K562 (cell line): ENCODE measurements at regions of chr1 and their contacts with region 1.

Region 1: GRCh38 chr1:231040019-231040799 is at the start of gene FAM89A:
- DNase-seq: peak; percentile 84 to 99 (median 98)
- ATAC-seq: peak; percentile 79
- H3K4me3 ChIP-seq: peak within 1 kb of the TSS; percentile 75
- H3K27ac ChIP-seq: peak within 1 kb of the TSS; percentile 72
- H3K4me1 ChIP-seq: peaks cover 30 to 45% of the 10 kb centered on the region in 2 experiments
- H3K27me3 ChIP-seq: no peaks in the 10 kb centered on the region
- CTCF ChIP-seq: no peak
- EP300 ChIP-seq: no peak
- POLR2A ChIP-seq: peak; percentile 83
- RAD21 ChIP-seq: no peak
- polyA plus RNA-seq, gene FAM89A: 8.7 to 13.3 TPM

Region 2: DNA sequence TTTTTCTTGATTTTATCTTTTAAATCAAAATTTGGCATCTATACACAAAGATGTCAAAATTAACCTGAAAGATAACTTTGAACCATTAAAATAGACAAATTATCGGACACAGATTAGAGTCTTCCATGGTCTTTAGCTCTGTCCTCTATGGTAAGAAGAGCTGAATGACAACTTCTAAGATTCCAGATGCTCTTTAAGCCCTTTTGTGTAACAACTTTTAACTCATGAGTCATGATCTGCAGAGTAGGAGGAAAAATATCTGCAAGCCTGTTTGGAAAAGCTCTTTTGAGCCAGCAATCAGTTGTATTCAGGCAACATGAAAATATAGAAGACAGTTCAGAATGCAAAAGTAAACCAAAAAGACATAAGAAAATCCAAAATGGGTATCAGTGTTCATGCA is 99.4 kb before region 1 on chr1:
- CTCF ChIA-PET with region 1: no interaction called
- POLR2A ChIA-PET with region 1: no interaction called
- in situ Hi-C with region 1: no loop called
- intact Hi-C with region 1: no loop called
- DNase-seq: no peak
- ATAC-seq: no peak
- H3K4me3 ChIP-seq: no peak overlapping the region
- H3K27ac ChIP-seq: no peak overlapping the region
- H3K4me1 ChIP-seq: no peaks in the 10 kb centered on the region
- H3K27me3 ChIP-seq: no peaks in the 10 kb centered on the region
- CTCF ChIP-seq: no peak
- EP300 ChIP-seq: no peak
- POLR2A ChIP-seq: no peak
- RAD21 ChIP-seq: no peak

Region 3: DNA sequence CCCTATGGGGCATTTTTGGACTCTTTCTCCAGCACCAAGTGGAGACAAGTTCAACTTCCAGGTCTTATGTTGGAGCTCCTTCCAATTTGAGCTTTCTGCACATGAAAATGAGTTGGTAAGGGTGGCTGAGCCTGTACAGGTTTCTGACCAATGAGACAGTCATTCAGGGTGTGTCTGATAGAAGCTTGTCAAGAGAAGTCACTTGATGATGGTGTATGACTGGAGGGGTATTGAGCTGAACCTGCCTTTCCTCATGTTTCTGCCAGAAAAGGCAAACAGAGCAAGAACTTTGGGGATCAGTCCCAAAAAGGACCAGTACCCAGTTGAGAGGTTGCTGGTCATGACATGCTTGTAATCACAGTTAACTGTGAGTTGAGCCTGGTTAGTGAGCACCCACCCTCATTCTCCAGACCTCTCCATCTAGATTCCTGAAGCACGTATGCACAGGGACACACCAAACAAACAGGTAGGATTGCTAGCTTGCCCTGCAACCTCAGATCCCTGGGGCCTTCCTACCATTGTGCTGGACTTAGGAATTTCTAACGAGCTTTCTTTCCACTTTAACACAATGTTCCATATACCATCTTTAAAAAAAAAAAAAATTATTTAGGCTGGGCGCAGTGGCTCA is 26.7 kb before region 1 on chr1:
- CTCF ChIA-PET with region 1: no interaction called
- POLR2A ChIA-PET with region 1: interaction called, 11 read pairs
- in situ Hi-C with region 1: no loop called
- intact Hi-C with region 1: no loop called
- DNase-seq: no peak
- ATAC-seq: no peak
- H3K4me3 ChIP-seq: no peak overlapping the region
- H3K27ac ChIP-seq: no peak overlapping the region
- H3K4me1 ChIP-seq: no peaks in the 10 kb centered on the region
- H3K27me3 ChIP-seq: no peaks in the 10 kb centered on the region; a peak in 1 of 5 replicates
- CTCF ChIP-seq: no peak
- EP300 ChIP-seq: no peak
- POLR2A ChIP-seq: no peak
- RAD21 ChIP-seq: no peak

Region 4: DNA sequence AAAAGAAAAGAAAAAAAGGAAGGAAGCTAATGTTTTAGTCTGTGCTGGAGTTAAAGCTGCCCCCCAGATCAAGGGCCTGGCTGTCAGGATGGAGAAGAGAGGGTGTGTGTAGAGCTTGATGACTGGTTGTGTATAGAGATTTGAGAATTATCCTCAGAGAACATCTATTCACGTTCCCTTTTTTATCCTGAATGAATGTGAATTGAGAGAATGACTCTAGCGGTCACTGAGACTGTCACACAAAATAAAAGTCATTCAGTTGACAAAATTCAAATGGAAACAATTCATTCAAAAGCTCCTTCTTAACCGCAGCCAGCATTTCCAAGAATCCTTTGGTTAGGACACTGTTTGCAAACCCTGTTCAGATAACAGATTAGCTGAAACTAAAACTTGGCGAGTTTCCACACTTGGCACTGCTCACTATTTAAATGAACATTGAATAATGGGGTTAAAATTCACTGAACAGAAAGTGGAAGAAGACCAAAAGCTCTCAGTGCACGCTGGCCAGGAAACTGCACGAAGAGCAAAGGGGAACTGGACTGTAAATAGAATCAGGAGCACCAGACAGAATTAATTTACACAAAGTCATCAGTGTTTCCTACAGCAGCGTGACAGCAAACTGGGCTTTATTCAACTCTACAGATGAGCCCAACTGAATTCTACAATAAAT is 13.4 kb after region 1 on chr1:
- CTCF ChIA-PET with region 1: no interaction called
- POLR2A ChIA-PET with region 1: interaction called, 20 read pairs
- in situ Hi-C with region 1: no loop called
- intact Hi-C with region 1: no loop called
- DNase-seq: peak in 2 of 4 experiments; percentile 50 to 85
- ATAC-seq: peak; percentile 49
- H3K4me3 ChIP-seq: peak overlapping the region; percentile 6; the same call in 1 of the 2 replicates
- H3K27ac ChIP-seq: peak overlapping the region; percentile 32
- H3K4me1 ChIP-seq: peaks cover 7 to 37% of the 10 kb centered on the region in 2 experiments
- H3K27me3 ChIP-seq: no peaks in the 10 kb centered on the region
- CTCF ChIP-seq: 0 out of 6 replicates have a peak, but pooled peaks of 1 of the 3 experiments have one; percentile 3
- EP300 ChIP-seq: peak; percentile 85
- POLR2A ChIP-seq: no peak
- RAD21 ChIP-seq: peak in 1 of 2 experiments; percentile 37; a peak in 2 of 4 replicates

Region 5: GRCh38 chr1:231065510-231066241 is 25.5 kb after region 1 on chr1:
- CTCF ChIA-PET with region 1: no interaction called
- POLR2A ChIA-PET with region 1: interaction called, 16 read pairs
- in situ Hi-C with region 1: no loop called
- intact Hi-C with region 1: loop called (anchors 1 kb)
- DNase-seq: peak; percentile 48 to 77 (median 59)
- ATAC-seq: peak; percentile 92
- H3K4me3 ChIP-seq: no peak overlapping the region
- H3K27ac ChIP-seq: peak overlapping the region; percentile 61
- H3K4me1 ChIP-seq: peaks cover 0 to 39% of the 10 kb centered on the region in 2 experiments
- H3K27me3 ChIP-seq: no peaks in the 10 kb centered on the region
- CTCF ChIP-seq: no peak
- EP300 ChIP-seq: peak; percentile 90
- POLR2A ChIP-seq: no peak
- RAD21 ChIP-seq: peak in 1 of 2 experiments; percentile 24; a peak in 1 of 4 replicates

Region 6: GRCh38 chr1:231079163-231079562 is 39.0 kb after region 1 on chr1:
- CTCF ChIA-PET with region 1: no interaction called
- POLR2A ChIA-PET with region 1: interaction called, 6 read pairs
- in situ Hi-C with region 1: no loop called
- intact Hi-C with region 1: loop called (anchors 2 kb)
- DNase-seq: no peak
- ATAC-seq: peak; percentile 89
- H3K4me3 ChIP-seq: no peak overlapping the region
- H3K27ac ChIP-seq: no peak overlapping the region
- H3K4me1 ChIP-seq: 0 out of 5 replicates have a peak, but pooled peaks cover 0 to 4% of the 10 kb centered on the region in 2 experiments
- H3K27me3 ChIP-seq: no peaks in the 10 kb centered on the region; a peak in 1 of 5 replicates
- CTCF ChIP-seq: peak; percentile 12 to 49 (median 29); a peak in 2 of 6 replicates
- EP300 ChIP-seq: no peak
- POLR2A ChIP-seq: no peak
- RAD21 ChIP-seq: peak; percentile 48 to 72; a peak in 3 of 4 replicates

Region 7: GRCh38 chr1:231200388-231201031 is 160.3 kb after region 1 on chr1:
- CTCF ChIA-PET with region 1: no interaction called
- POLR2A ChIA-PET with region 1: no interaction called
- in situ Hi-C with region 1: no loop called
- intact Hi-C with region 1: loop called (anchors 5 kb)
- DNase-seq: peak; percentile 72 to 94 (median 80)
- ATAC-seq: peak; percentile 84
- H3K4me3 ChIP-seq: no peak overlapping the region
- H3K27ac ChIP-seq: peak overlapping the region; percentile 5; the same call in 1 of the 3 replicates
- H3K4me1 ChIP-seq: peaks cover 42% of the 10 kb centered on the region in 2 experiments
- H3K27me3 ChIP-seq: no peaks in the 10 kb centered on the region; a peak in 1 of 5 replicates
- CTCF ChIP-seq: no peak
- EP300 ChIP-seq: peak; percentile 95
- POLR2A ChIP-seq: no peak
- RAD21 ChIP-seq: no peak